Calu3 (cell line): ENCODE measurements at regions of chr10 and their contacts with region 1.

Region 1: DNA sequence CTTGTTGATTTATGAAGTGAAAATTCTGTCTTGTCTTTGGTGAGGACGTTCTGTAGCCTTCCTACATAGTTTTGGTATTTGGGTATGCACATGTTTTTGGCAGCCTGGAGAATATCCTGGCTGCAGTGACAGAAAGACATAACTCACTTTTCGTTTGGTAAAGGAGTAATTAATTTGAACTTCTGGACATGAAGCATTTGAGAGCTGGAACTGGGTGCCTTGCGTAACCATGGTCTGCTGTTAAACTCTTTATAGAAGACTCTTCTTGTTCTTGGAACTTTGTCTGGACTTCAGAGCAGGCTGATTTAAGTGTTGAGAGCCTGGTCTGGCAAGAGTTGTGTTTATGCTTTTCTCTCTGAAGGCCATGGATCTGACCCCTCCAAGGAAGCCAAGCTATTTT is 231.3 kb downstream of the LRMDA start:
- DNase-seq: no peak
- H3K4me3 Mint-ChIP-seq: no peak overlapping the region
- H3K27ac Mint-ChIP-seq: no peak overlapping the region
- H3K4me1 Mint-ChIP-seq: no peaks in the 10 kb centered on the region
- H3K27me3 Mint-ChIP-seq: peaks cover 28% of the 10 kb centered on the region
- CTCF ChIP-seq: no peak

Region 2: DNA sequence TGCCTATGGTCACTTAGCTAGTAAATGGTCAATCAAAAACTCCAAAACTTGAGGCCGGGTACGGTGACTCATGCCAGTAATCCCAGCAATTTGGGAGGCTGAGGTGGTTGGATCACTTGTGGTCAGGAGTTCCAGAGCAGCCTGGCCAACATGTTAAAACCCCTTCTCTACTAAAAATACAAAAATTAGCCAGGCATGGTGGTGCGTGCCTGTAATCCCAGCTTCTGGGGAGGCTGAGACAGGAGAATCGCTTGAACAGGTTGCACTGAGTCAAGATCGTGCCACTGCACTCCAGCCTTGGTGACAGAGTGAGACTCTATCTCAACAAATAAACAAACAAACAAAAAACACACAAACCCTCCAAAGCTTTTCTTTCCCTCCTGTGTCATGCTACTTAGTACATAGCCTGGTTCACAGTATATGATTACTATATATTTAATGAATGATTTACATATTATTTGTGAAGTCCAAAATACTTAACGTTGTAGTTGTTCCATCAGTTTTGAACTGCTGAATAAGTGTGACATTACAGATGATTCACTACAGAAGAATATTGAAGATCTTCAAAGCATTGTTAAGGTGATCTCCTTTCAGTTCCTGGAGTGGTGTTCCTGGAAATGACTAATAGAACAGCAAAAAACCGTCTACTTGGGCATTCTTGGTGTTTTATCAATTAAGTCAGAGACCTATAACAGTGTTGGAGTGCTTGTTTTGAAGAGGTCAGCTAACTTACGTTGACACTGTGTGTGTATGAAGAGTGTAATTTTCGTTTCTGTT is 1438.8 kb before region 1 on chr10:
- CTCF ChIA-PET with region 1: no interaction called
- intact Hi-C with region 1: no loop called
- DNase-seq: no peak
- H3K4me3 Mint-ChIP-seq: no peak overlapping the region
- H3K27ac Mint-ChIP-seq: peak overlapping the region; percentile 76
- H3K4me1 Mint-ChIP-seq: peaks cover 15% of the 10 kb centered on the region
- H3K27me3 Mint-ChIP-seq: no peaks in the 10 kb centered on the region
- CTCF ChIP-seq: no peak

Region 3: DNA sequence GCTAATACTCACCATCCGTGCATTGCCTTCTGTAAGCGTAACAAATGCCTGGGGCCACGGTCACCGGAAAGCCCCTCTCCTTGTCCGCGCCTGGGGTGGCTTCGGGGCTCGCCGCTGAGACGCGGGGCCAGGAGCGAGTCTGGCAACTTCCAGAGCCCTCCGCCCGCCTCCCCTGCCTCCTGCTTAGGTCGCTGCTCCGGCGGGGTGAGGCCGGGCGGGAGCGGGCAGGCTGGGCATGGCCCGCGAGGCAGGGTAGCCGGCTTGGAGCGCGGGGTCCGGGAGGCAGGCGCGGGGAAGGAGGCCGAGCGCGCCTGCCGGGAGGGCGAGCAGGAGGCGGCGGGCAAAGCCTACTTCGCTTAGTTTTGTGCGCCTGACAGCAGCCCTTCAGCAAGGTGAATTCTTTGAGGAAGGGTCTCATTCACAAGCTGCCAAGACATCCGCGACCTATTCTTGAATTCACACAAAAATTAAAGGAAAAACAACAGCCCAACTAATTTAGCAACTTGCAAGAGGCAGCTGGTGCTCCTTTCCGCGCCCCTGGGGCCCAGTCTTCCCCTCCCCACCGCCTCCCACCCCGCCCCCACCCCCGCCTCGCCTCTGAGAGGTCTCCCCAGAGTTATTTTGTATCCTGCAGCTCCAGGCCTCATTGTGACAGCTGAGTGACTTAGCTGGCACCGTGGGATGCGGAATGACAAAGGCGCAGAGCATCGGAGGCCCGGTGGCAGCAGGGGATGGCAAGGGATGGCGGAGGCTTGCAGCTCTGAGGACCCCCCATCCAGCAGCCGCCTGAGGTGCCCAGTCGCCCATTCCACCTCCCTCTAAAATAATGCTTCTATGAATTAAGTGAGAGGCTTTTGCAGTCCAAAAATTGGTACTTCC is 849.1 kb before region 1 on chr10:
- CTCF ChIA-PET with region 1: interaction called, 11 read pairs
- intact Hi-C with region 1: no loop called
- DNase-seq: no peak
- H3K4me3 Mint-ChIP-seq: no peak overlapping the region
- H3K27ac Mint-ChIP-seq: no peak overlapping the region
- H3K4me1 Mint-ChIP-seq: no peaks in the 10 kb centered on the region
- H3K27me3 Mint-ChIP-seq: no peaks in the 10 kb centered on the region
- CTCF ChIP-seq: no peak

Region 4: GRCh38 chr10:75696536-75696935 is 33.8 kb after region 1 on chr10:
- CTCF ChIA-PET with region 1: no interaction called
- intact Hi-C with region 1: no loop called
- DNase-seq: no peak
- H3K4me3 Mint-ChIP-seq: no peak overlapping the region
- H3K27ac Mint-ChIP-seq: no peak overlapping the region
- H3K4me1 Mint-ChIP-seq: no peaks in the 10 kb centered on the region
- H3K27me3 Mint-ChIP-seq: peaks cover 14% of the 10 kb centered on the region
- CTCF ChIP-seq: no peak

Region 5: GRCh38 chr10:76632777-76633071 is 970.0 kb after region 1 on chr10:
- CTCF ChIA-PET with region 1: no interaction called
- intact Hi-C with region 1: no loop called
- DNase-seq: no peak
- H3K4me3 Mint-ChIP-seq: no peak overlapping the region
- H3K27ac Mint-ChIP-seq: no peak overlapping the region
- H3K4me1 Mint-ChIP-seq: no peaks in the 10 kb centered on the region
- H3K27me3 Mint-ChIP-seq: no peaks in the 10 kb centered on the region
- CTCF ChIP-seq: no peak